H1 (cell line): ENCODE measurements at regions of chr10 and their contacts with region 1.

Region 1: DNA sequence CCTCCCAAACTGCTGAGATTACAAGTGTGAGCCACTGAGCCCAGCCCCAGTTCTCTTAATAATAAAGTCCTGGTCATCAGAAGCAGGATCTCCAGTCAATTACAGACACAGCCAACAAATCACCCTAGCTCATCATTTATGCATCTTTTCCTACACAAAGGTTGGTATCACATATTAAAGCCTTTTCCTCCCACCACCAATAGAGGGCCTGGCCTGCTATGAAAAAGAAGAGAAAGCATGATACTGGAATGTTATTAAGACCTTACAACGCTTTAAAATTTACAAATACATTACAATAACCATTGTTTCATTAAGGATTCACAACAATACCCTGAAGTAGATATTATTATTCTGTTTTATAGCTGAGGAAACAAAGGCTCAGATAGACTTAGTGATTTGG is 25.9 kb downstream of the VAX1 start:
- DNase-seq: no peak
- H3K4me3 ChIP-seq: no peak overlapping the region
- H3K27ac ChIP-seq: no peak overlapping the region
- H3K4me1 ChIP-seq: no peaks in the 10 kb centered on the region
- H3K27me3 ChIP-seq: no peaks in the 10 kb centered on the region; a peak in 1 of 7 replicates
- CTCF ChIP-seq: peak in 1 of 3 experiments; percentile 50; a peak in 1 of 4 replicates
- EP300 ChIP-seq: no peak
- POLR2A ChIP-seq: no peak
- RAD21 ChIP-seq: peak; percentile 30; a peak in 3 of 4 replicates

Region 2: GRCh38 chr10:117126034-117126433 is 13.8 kb after region 1 on chr10:
- CTCF ChIA-PET with region 1: interaction called, 41 read pairs
- POLR2A ChIA-PET with region 1: no interaction called
- DNase-seq: no peak
- H3K4me3 ChIP-seq: no peak overlapping the region
- H3K27ac ChIP-seq: no peak overlapping the region
- H3K4me1 ChIP-seq: peaks cover 1 to 3% (median 3%) of the 10 kb centered on the region in 4 experiments; a peak in 5 of 7 replicates
- H3K27me3 ChIP-seq: peaks cover 17 to 43% (median 39%) of the 10 kb centered on the region in 4 experiments
- CTCF ChIP-seq: no peak
- EP300 ChIP-seq: no peak
- POLR2A ChIP-seq: no peak
- RAD21 ChIP-seq: no peak

Region 3: DNA sequence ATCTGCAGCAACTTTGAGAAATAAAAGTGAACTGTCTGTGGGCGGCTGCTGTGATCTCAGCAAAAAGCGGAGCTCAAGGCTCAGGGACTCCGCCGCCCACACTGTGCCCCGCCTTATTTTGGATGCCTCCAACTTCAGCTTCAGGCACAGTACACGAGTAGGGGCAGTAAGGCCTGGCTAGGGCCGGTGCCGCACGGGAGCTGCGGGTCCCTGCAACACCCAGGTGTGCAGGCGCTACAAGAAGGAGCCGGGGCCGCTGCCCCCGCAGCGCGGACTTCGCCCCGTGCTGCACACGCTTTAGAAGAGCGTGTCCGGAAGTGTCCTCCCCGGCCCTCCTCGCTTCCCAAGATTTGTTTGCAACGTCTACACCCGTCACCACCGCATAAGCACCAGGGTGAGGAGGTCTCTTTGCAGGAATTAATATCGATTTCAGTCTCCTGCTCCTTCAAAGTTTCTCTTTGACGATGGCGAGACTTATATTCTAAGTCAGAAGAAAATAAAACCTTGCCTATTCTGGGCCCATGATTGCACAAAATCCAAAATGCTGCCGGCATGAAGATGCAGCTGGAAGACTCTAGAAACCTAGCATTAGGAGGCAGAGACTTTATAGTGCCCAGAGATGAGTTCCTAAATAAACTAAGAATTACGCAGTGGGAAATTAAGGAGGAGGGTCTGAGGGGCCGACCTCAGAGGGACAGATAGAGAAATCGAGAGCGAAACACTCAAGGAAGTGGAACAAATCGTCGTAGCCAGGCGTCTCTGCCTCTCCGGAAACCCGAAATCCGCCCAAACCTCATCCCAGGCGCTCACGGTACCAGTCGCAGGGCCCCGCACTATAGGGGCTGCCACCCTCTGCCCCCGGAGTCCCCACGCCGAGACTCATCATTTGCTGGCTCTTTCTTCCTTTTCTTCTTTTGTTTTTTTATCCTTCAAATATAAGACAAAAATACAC is 19.4 kb after region 1 on chr10:
- CTCF ChIA-PET with region 1: interaction called, 41 read pairs
- POLR2A ChIA-PET with region 1: no interaction called
- DNase-seq: peak in 1 of 2 experiments; percentile 62
- H3K4me3 ChIP-seq: peak overlapping the region in 3 of 4 experiments; percentile 24 to 50 (median 27); a peak in 7 of 8 replicates
- H3K27ac ChIP-seq: no peak overlapping the region
- H3K4me1 ChIP-seq: peaks cover 3 to 24% (median 12%) of the 10 kb centered on the region in 4 experiments
- H3K27me3 ChIP-seq: peaks cover 72 to 98% (median 92%) of the 10 kb centered on the region in 4 experiments
- CTCF ChIP-seq: no peak
- EP300 ChIP-seq: no peak
- POLR2A ChIP-seq: no peak
- RAD21 ChIP-seq: no peak

Region 4: GRCh38 chr10:117137031-117137910 is 25.1 kb after region 1 on chr10:
- CTCF ChIA-PET with region 1: interaction called, 10 read pairs
- POLR2A ChIA-PET with region 1: no interaction called
- DNase-seq: peak in 1 of 2 experiments; percentile 74
- H3K4me3 ChIP-seq: peak overlapping the region; percentile 10 to 55 (median 30); a peak in 7 of 8 replicates
- H3K27ac ChIP-seq: no peak overlapping the region
- H3K4me1 ChIP-seq: peaks cover 3 to 32% (median 16%) of the 10 kb centered on the region in 4 experiments
- H3K27me3 ChIP-seq: peaks cover 96 to 99% (median 98%) of the 10 kb centered on the region in 4 experiments
- CTCF ChIP-seq: no peak
- EP300 ChIP-seq: no peak
- POLR2A ChIP-seq: no peak
- RAD21 ChIP-seq: no peak